Activated T-helper 1 cell treated with anti-CD3 and anti-CD28 coated beads, Interleukin-12 subunit alpha, Interleukin-12 subunit beta, Interleukin-2, Interleukin-4 antibody, amounts not matched to agents 30 ng/mL and 10 ng/mL and 1 ng/mL, durations not matched to agents 14 hours and 24 hours and 36 hours (primary cell): ENCODE measurements at regions of chr16 and their contacts with region 1.

Region 1: DNA sequence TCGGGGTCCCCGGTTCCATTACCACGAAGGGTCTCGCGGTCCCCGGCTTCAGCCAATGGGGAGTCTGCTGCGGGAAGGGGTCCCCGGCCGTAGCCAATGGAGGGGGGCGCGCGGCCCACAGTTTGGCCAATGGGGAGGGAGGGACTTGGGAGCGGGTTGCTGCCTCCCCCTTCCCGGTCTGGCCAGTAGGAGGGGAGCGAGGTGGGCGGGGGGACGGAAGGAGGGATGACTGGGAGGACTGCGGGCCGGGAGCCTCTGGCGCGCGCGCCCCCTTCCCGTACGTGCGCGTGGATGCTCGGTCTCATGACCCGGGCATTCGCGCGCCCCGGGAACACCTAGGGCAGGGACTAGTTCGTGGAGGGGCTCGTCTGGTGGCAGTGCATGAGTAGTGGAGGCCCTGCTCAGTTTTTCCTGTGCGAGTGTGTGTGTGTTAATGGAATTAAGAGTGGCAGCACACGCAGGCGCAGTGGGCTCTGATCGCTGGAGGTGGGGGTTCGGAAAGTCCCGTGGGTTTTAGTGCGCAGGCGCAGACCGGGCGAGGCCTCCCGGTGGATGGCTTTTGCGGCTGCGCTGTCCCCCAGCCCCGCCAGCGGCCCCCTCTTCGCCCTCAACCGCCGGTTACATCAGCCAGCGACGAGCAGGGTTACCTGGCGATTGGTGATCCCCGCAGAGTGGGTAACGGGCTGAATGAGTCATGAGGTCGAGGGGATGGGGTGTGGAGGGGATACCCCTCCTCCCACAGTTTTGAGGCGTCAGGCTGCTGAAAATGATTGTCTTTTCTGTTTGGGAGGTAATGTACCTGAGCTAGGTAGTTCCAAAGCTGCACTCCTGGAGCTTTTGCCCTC is 1.3 kb downstream of the ATXN2L start:
- DNase-seq: peak; percentile 93
- H3K4me3 Mint-ChIP-seq: peak overlapping the region; percentile 98
- H3K27ac Mint-ChIP-seq: peak overlapping the region; percentile 100
- H3K4me1 Mint-ChIP-seq: peaks cover 52% of the 10 kb centered on the region
- H3K27me3 Mint-ChIP-seq: peaks cover 4% of the 10 kb centered on the region

Region 2: DNA sequence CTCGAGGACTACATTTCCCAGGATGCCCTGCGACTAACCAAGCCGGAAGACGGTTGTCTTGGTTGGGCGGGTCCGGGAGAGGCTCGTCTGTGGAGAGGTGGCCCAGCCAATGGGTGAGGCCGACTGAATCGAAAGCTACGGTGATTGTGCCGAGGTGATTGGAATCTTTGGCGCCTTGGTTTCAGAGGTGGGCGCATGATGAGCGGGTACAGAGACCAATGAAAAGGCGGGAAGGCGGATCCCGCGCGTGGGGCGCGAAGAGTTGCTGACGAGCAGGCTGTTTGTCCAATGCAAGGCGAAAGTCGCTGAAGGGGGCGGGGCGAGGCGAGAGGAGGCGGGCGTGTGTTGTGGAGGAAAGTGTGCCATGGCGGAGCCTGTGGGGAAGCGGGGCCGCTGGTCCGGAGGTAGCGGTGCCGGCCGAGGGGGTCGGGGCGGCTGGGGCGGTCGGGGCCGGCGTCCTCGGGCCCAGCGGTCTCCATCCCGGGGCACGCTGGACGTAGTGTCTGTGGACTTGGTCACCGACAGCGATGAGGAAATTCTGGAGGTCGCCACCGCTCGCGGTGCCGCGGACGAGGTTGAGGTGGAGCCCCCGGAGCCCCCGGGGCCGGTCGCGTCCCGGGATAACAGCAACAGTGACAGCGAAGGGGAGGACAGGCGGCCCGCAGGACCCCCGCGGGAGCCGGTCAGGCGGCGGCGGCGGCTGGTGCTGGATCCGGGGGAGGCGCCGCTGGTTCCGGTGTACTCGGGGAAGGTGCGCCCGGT is 126.7 kb after region 1 on chr16 and contains the start of gene NFATC2IP:
- intact Hi-C with region 1: loop called (anchors 1 kb)
- DNase-seq: peak; percentile 99
- H3K4me3 Mint-ChIP-seq: peak within 1 kb of the TSS; percentile 95
- H3K27ac Mint-ChIP-seq: peak within 1 kb of the TSS; percentile 95
- H3K4me1 Mint-ChIP-seq: peaks cover 33% of the 10 kb centered on the region
- H3K27me3 Mint-ChIP-seq: no peaks in the 10 kb centered on the region
- total RNA-seq, gene NFATC2IP: 110 and 111 TPM in 2 replicates